GM10248 (cell line): ENCODE measurements at regions of chr1 and their contacts with region 1.

Region 1: DNA sequence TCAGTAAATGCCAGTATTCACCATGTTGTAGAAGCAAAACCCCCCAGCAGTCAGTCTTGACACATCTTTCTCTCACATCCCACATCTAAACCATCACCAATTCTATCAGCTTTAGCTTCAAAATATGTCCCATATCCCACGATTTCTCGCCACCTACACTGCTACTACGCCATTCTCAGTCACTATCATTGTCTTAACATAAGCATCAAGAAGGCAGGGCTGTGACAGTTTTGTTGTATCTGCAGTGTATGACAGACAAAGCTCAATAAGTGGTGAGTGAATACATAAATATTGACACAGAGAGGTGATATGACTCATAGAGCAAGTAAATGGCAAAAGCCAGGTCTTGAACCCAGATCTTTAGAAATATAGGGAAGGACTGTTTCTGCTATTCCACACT is 59.9 kb downstream of the JAK1 start:
- DNase-seq: no peak
- CTCF ChIP-seq: no peak

Region 2: DNA sequence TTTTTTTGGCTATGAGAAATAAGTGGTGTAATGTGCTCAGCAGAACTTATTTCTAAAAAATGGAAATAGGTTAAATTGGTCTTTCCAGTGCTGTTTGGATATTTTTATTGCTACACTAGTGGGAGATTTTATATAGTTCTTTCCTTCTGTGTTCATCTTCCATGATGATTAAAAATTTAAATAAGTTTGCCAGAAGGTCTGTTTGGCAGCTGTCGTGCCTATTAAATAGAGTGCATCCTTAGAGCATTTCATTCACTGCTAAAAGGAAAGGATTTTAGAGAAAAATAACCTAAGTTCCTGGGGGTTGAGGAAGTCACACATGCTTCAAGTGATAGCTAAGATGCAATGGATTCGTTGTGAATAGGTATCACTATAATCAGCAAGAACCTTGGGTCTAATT is 191.3 kb before region 1 on chr1:
- CTCF ChIA-PET with region 1: no interaction called
- POLR2A ChIA-PET with region 1: no interaction called
- DNase-seq: no peak
- CTCF ChIP-seq: no peak

Region 3: GRCh38 chr1:64811131-64811530 is 95.3 kb before region 1 on chr1:
- CTCF ChIA-PET with region 1: no interaction called
- POLR2A ChIA-PET with region 1: no interaction called
- DNase-seq: no peak
- CTCF ChIP-seq: no peak

Region 4: DNA sequence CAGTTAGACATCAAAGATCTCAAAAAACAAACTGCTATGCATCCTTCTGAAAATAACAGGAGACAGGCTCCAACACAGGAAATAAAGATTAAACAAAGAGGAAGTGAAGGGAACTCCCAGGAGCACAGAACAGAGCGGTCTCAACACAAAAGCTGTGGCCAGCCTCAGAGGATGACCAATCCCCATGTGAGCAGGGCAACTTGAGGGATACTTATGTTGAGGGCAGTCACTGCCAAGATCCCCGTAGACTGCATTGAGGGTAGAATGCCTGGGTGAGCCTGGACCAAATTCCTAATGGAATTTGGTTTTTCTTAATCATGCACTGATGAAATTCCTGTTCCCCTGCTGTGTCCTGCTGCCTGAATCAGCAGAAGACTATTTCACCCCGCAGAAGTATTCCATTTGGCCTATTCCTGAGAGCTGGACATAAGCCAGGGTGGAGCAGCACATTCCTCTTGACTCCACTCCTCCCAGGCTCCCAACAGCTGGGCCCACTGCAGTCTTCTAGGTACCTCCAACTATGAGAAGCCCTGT is 10.9 kb after region 1 on chr1:
- CTCF ChIA-PET with region 1: interaction called, 48 read pairs
- POLR2A ChIA-PET with region 1: no interaction called
- DNase-seq: no peak
- CTCF ChIP-seq: no peak

Region 5: DNA sequence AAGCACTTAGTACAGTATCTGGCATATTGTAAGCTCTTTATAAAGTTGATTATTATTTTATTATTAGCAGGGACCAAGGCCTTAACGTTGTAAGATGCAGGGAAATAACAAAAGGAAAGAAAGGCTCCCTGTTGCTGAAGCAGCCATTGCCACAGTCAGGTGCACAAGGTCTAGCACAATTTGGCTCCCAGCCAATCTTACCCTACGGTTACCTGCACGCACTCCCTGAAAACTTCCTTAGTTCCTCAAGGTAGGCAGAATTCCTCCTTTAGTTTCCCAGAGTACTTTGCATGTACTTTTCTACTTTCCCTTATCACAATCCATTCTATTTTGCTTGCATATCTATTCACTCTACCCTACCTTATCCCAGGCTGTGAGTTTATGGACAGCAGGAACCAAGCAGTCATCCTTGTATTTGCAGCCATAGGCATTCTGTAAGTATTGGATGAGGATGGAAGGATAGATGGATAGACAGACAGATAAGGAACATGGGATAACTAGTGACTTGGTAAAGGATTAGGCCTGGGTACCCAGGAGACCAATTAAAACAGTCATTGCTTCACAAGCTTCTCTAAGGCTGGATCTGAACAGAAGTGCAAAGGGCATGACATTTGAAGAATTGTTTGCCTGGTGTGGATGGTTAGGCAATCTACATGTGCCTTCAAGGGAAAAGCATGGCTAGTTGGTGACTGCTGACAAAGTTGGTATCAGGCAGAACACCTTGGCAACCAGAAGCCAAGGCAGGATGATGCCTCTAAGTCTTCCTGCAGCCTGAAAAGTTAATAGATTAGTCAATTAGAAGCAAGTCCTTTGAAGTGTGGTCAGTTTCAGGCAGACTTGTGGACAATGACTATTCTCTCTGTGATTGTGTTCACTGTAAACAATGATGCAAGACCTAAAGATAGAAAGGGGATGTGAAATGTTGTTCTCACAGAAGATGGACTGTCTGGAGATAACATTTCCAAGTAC is 80.7 kb after region 1 on chr1:
- CTCF ChIA-PET with region 1: no interaction called
- POLR2A ChIA-PET with region 1: no interaction called
- DNase-seq: peak; percentile 65
- CTCF ChIP-seq: no peak